Left lung (tissue), 14 donors: ENCODE measurements at regions of chr15 and their contacts with region 1.

Region 1: GRCh38 chr15:60444289-60444912 is 34.5 kb downstream of the ICE2 start:
- DNase-seq: peak in 1 of 4 donors; percentile 24
- ATAC-seq: peak; percentile 60
- H3K4me3 ChIP-seq: no peak overlapping the region
- H3K27ac ChIP-seq: no peak overlapping the region
- H3K4me1 ChIP-seq: peaks cover 0 to 3% of the 10 kb centered on the region in 2 donors
- H3K27me3 ChIP-seq: no peaks in the 10 kb centered on the region
- CTCF ChIP-seq: peak; percentile 39

Region 2: DNA sequence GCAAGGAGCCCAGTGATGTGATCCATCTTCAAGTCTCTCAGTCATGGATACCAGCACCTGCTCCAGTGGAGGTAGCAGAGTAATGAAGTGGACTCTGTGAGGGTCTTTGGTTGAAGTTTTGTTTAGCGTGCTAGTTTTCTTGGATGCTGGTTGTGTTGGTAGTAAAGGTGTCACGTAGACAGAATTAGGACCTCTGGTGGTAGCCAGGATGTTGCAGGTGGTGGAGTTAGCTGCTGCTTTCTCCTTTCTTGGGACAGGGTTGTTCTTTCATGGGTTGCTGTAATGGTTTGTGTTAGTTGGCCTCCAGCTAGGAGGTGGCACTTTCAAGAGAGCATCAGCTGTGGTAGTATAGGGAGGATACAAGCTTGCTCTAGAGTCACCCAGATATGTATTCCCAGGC is 171.8 kb before region 1 on chr15:
- intact Hi-C with region 1: no loop called
- DNase-seq: no peak
- ATAC-seq: no peak
- H3K4me3 ChIP-seq: no peak overlapping the region
- H3K27ac ChIP-seq: no peak overlapping the region
- H3K4me1 ChIP-seq: no peaks in the 10 kb centered on the region
- H3K27me3 ChIP-seq: no peaks in the 10 kb centered on the region
- CTCF ChIP-seq: no peak

Region 3: GRCh38 chr15:60358935-60359682 is 85.3 kb before region 1 on chr15:
- intact Hi-C with region 1: loop called in 1 of 2 experiments (anchors 10 kb)
- DNase-seq: no peak
- ATAC-seq: no peak
- H3K4me3 ChIP-seq: no peak overlapping the region
- H3K27ac ChIP-seq: no peak overlapping the region
- H3K4me1 ChIP-seq: peaks cover 0 to 22% of the 10 kb centered on the region in 2 donors
- H3K27me3 ChIP-seq: no peaks in the 10 kb centered on the region
- CTCF ChIP-seq: no peak